Activated naive CD4-positive, alpha-beta T cell treated with anti-CD3 and anti-CD28 coated beads for 36 hours (primary cell): ENCODE measurements at regions of chr10 and their contacts with region 1.

Region 1: DNA sequence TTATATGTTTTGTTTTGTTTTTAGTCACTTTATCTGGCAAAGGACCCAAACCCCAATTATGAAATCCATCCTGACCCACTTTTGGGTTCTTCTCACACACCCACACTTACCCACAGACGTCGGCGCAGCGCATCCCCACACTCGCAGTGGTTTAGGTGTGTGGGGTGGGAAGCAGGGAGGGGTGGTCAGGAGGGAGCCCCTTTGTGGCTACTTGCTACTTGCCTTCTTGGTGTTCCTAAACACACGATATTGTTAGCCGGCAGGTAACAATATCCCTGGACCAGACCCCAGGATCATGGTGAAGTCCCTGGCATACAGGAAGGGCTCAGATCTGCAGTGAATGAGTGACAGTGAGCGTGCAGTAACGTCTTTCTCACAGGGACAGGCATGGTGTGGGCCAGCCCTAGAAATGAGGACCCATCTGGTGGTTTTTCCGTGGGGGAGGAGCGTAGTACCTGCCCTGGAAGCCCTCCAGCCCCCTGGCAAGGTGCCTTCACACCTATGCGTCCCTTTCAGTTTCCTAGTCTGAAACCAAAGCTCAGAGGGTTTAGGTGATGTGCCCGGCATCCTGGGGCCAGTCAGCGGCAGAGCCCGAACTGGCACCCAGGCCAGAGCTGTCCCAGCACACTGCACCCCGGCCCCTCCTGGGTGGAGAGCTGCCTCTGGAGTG is 4.4 kb downstream of the SPOCK2 start:
- DNase-seq: peak; percentile 88
- H3K4me3 Mint-ChIP-seq: peak overlapping the region; percentile 87
- H3K27ac Mint-ChIP-seq: peak overlapping the region; percentile 92
- H3K4me1 Mint-ChIP-seq: peaks cover 76% of the 10 kb centered on the region
- H3K27me3 Mint-ChIP-seq: no peaks in the 10 kb centered on the region

Region 2: DNA sequence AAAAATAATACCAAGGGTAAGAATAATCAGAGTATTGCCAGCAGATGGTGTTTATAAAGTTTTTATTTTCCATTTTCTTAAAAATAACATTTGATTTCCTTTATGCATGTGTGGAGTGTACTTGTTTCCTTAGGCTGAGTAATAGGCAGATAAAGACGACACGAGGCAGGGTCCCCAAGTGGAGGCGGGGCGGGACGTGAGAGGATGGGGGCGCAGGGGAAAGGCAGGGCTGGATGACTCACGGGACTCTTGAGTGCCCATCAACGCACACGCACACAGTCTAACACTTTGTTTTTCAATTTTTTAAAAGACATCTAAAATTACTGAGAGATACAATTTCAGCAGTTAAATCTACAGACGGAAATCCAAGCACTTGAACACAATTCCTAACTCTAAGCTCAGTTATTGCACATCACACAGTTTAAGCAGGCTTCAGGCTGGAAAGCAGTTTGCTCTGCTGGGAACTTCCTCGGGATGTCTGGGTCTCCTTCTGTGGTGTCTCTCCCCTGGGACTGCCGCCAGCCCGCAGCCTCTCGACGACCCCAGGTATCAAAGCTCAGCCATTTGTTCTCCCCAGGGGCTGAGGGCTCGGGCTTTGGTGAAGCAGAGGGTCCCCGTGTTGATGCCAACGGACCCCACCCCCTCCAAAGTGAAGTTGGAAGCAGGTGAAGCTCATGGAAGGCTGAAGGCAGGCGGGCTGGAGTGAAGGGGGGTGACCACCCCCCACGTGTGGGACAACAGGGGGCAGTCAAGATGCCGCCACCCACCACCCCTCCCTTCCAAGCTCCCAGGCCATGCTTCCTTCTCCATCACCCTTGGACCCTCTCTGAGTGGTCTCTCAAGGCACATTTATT is 24.7 kb before region 1 on chr10:
- CTCF ChIA-PET with region 1: no interaction called
- intact Hi-C with region 1: no loop called
- DNase-seq: peak; percentile 38
- H3K4me3 Mint-ChIP-seq: no peak overlapping the region
- H3K27ac Mint-ChIP-seq: no peak overlapping the region
- H3K4me1 Mint-ChIP-seq: peaks cover 34% of the 10 kb centered on the region
- H3K27me3 Mint-ChIP-seq: no peaks in the 10 kb centered on the region

Region 3: GRCh38 chr10:72215652-72216549 is 132.0 kb after region 1 on chr10 and contains the starts of genes ANAPC16 and ASCC1:
- CTCF ChIA-PET with region 1: interaction called, 6 read pairs
- intact Hi-C with region 1: loop called (anchors 1 kb)
- DNase-seq: peak; percentile 93
- H3K4me3 Mint-ChIP-seq: peak within 1 kb of the TSS; percentile 91
- H3K27ac Mint-ChIP-seq: peak within 1 kb of the TSS; percentile 98
- H3K4me1 Mint-ChIP-seq: peaks cover 67% of the 10 kb centered on the region
- H3K27me3 Mint-ChIP-seq: no peaks in the 10 kb centered on the region
- total RNA-seq, gene ANAPC16: 127 to 128 TPM
- total RNA-seq, gene ASCC1: 61.6 to 68.5 TPM